ENCODE measurements at regions of chr22 and their contacts with region 1.

Region 1: GRCh38 chr22:30947816-30948454 is 20.6 kb downstream of the MORC2 start:
- DNase-seq: no peak
- ATAC-seq: peak; percentile 80

Region 2: DNA sequence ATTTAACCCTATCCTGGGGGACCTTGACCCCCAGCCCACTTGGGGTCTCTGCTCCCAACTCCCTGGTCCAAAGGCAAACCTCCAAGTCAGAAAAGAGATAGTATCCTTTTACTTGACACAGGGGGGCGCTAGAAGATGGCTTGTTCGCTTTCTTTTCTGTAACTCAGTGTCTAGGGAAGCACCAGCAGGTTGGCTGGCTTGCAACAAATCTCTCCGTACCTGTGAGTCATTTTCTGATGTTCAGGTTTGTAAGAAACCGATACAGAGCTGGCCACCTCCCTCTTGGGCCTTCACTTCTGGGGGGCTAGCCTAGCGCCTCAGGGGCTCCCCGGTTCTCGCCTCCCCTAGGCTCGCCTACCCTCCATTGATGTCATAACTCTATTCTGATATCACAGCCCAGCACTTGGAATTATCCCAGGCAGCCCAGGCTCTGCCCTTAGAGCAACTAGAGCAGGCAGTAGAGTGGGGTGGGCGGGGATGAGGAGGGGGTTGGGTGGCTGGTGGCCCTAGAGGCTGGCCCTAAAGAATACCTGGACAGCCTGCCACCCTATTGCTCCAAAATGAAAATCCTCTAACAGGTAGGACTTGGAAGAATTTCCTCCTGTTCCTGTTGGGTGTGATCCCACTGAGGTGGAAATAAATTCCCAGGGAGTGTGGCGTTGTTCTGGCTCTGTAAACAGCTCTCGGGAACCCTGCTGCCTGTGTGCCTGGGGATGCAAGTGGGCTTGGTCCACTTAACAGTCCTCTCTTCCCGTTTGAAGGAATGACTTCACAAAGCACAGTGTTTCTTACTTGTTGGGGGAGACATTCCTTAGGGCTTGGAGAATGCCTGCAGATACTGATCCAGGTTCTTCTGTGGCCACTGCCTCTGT is 183.9 kb before region 1 on chr22:
- intact Hi-C with region 1: no loop called
- DNase-seq: peak; percentile 27 to 39
- ATAC-seq: peak; percentile 78

Region 3: GRCh38 chr22:31046539-31047226 is 98.7 kb after region 1 on chr22:
- intact Hi-C with region 1: no loop called
- DNase-seq: peak; percentile 8 to 36
- ATAC-seq: no peak

Region 4: DNA sequence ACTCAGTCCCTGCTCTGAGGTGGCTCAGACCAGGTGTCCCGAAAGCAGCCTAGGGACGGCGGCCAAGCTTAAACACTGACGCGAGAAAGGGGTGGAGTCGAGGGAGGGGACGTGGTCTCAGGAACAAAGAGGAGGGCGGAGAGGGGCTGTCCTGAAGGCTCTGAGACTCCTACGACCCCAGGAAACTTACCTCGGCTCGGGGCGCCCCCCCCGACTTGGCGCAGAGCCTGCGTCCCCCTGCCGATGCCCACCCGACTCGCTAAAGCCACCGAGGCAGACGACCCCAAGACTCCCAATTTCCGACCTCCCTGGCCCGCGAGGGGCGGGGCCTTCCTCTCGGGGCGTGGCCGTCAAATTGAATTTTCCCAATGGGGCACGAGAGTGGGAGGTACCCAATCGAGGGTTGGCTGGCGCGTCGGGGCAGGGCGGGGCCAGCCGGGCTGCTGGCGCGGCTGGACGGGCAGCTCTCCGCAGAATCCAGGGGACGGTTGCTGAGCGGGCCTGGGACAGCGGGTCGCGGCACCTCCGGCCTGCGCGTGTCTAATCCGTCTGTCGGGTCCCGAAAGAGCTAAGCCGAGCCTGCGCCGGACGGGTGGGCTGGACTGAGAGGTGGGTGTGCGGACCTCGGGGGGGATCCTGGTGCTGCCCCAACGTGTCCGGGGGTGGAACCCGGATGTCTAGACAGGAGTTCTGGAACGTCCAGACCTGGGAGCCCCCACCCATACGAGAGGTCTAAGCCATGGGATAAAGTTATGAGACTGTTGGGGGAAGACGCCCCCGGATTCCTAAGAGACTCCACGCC is 133.1 kb after region 1 on chr22 and contains the start of gene SMTN:
- intact Hi-C with region 1: loop called in 1 of 2 experiments (anchors 5 kb)
- DNase-seq: peak; percentile 94 to 97
- ATAC-seq: peak; percentile 64
- total RNA-seq, gene SMTN: 62.6 to 141 TPM

Region 5: DNA sequence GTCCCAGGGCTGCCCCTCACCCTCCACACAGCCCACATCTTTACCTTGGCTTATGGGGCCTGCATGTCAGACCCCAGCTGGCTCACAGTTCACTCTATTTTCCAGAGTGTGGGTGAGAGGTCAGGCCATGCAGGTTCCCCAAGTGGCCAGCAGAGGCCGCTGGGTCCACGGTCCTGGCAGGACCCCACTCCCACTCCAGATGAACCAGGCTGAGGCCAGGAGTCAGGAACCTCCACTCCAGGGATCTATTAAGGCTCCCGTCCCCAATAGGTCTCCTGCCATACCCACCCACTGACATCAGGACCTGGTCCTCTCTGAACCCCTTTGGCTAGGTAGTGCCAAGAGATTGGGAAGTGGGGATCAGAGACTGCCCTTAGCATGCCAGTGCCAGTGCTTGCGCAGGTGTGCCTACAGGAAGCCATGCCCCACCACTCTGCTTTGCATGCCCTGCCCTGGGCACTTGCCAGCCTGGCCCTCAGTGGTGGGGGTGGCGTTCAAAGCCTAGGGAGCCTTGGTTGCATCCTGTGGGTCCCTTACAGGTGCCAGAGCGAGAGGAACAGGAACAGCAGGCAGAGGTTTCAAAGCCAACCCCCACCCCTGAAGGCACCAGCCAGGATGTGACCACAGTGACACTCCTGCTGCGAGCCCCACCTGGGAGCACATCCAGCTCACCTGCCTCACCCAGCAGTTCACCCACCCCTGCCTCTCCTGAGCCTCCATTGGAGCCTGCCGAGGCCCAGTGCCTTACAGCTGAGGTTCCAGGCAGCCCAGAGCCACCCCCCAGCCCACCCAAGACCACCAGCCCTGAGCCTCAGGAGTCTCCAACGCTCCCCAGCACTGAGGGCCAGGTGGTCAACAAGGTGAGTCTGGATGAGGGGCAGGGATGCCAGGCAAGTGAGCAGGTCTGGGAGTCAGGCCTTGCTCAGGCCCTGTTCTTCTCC is 141.5 kb after region 1 on chr22:
- intact Hi-C with region 1: loop called (anchors 5 to 10 kb)
- DNase-seq: no peak
- ATAC-seq: peak; percentile 25

Region 6: DNA sequence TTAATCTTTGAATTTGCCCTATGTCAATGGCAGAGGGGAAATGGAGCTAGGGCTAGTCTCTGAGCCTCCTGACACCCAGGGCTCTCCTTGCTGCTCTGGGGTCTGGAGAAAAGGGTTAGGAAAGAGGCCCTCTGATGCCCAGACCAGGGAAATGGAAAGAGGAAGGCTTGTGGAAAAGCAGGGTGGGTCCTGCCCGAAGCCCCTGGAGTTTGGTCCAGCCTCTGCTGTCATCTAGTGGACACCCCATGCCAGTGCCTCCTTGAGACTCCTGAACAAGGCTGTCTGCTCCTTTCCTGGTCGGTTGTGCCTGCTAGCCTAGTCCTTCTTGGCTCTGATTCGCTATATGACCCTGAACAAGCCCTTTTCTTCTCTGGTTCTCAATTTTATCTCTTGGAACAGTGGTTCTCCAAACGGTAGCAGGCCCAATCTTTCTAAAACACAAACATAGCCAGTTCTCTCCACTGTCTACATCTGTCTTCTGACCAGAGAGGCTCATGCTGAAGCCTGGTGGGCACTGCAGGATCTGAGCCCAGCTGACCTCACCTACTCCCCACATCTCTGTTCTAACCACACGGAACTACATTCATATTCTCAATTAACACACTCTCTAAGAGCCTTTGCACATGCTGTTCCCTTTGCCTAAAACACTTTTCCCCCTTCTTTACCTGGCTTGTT is 201.2 kb after region 1 on chr22:
- intact Hi-C with region 1: loop called in 1 of 2 experiments (anchors 10 kb)
- DNase-seq: peak; percentile 66 to 69
- ATAC-seq: peak; percentile 89

Measured in left colon (tissue), 2 donors.